ENCODE measurements at regions of chr4 and their contacts with region 1.

Region 1: GRCh38 chr4:80027611-80028010 is 45.4 kb downstream of the ANTXR2 start:
- DNase-seq: no peak
- ATAC-seq: no peak
- H3K4me3 Mint-ChIP-seq: no peak overlapping the region
- H3K27ac Mint-ChIP-seq: no peak overlapping the region
- H3K4me1 Mint-ChIP-seq: no peaks in the 10 kb centered on the region
- H3K27me3 Mint-ChIP-seq: no peaks in the 10 kb centered on the region
- CTCF ChIP-seq: no peak

Region 2: GRCh38 chr4:79979785-79980437 is 47.7 kb before region 1 on chr4:
- CTCF ChIA-PET with region 1: no interaction called
- POLR2A ChIA-PET with region 1: no interaction called
- intact Hi-C with region 1: no loop called
- DNase-seq: no peak
- ATAC-seq: no peak
- H3K4me3 Mint-ChIP-seq: no peak overlapping the region
- H3K27ac Mint-ChIP-seq: no peak overlapping the region
- H3K4me1 Mint-ChIP-seq: no peaks in the 10 kb centered on the region
- H3K27me3 Mint-ChIP-seq: no peaks in the 10 kb centered on the region
- CTCF ChIP-seq: no peak

Region 3: DNA sequence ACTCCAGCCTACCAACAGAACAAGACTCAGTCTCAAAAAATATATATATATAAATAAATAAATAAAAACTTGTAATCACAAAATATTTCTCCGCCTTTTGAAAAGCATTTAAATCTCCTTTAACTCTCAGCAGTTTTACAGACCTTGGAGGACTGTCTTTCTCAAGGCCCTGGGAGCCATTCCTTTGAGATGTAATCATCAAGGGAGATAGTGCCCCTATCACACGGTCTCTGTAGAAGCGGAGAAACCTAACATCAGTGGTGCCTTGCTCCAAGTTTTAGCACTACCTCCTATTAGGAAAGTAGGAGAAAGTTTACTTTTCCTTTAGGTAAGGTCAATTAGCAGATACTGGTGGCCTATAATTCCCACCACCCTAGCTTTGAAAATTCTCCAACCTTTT is 13.1 kb before region 1 on chr4:
- CTCF ChIA-PET with region 1: no interaction called
- POLR2A ChIA-PET with region 1: no interaction called
- intact Hi-C with region 1: loop called (anchors 2 kb)
- DNase-seq: no peak
- ATAC-seq: no peak
- H3K4me3 Mint-ChIP-seq: no peak overlapping the region
- H3K27ac Mint-ChIP-seq: no peak overlapping the region
- H3K4me1 Mint-ChIP-seq: peaks cover 3% of the 10 kb centered on the region
- H3K27me3 Mint-ChIP-seq: no peaks in the 10 kb centered on the region
- CTCF ChIP-seq: no peak

Region 4: DNA sequence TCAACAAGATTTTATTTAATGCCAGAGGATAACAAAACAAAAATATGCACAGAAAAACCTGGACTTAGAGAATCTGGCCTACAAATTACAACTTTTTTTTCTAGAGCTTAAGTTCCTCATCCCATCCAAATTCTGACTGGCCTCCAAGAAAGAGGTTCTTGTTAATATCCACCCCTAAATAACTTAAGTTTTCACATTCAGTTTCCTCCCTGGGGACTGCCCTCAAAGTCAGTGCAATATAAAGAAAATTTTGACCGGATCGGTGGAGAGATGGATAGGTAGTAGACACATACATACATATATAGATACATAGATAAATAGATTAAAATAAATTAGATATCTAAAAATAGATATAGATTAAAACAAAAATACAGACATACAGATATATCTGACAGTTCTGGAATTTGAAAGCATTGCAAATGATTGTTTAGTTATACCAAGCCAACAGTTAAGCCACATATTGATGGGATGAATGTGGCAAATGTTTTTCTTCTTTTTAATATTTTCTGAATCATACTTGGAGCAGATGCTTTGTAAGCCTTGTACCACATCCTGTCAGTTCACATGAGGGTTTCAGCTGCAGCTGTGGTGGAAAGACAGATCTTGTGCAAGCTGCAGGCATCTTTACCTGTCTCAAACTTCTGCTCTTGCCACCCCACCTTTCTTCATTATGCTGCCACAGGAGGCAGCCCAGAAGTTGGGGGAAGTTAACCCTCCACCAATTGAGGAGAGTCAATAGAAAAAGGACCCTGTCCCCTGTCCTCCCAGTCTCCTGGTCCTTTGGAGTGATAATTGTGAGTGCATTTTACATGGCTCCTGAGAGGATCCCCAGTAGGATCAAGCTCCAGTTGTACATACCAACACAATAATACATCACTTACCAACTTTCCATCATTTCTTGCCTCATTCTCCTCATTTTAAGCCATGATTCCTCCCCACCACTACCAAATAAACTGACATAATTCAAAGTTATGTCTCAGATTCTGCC is 111.2 kb after region 1 on chr4:
- CTCF ChIA-PET with region 1: no interaction called
- POLR2A ChIA-PET with region 1: no interaction called
- intact Hi-C with region 1: no loop called
- DNase-seq: no peak
- ATAC-seq: peak; percentile 72
- H3K4me3 Mint-ChIP-seq: peak overlapping the region; percentile 21
- H3K27ac Mint-ChIP-seq: peak overlapping the region; percentile 46
- H3K4me1 Mint-ChIP-seq: peaks cover 33% of the 10 kb centered on the region
- H3K27me3 Mint-ChIP-seq: no peaks in the 10 kb centered on the region
- CTCF ChIP-seq: no peak

Measured in activated B cell treated with CpG ODN at 0.5 μM for 24 hours (primary cell).